T-cell (primary cell): ENCODE measurements at regions of chr1 and their contacts with region 1.

Region 1: GRCh38 chr1:84944767-84945486 is 51.9 kb upstream of the LPAR3 start:
- DNase-seq: peak; percentile 22 to 97 (median 70)
- ATAC-seq: peak; percentile 90 to 95 (median 93)
- H3K4me3 ChIP-seq: peak overlapping the region; percentile 46
- H3K4me3 Mint-ChIP-seq: peak overlapping the region; percentile 79
- H3K27ac ChIP-seq: peak overlapping the region; percentile 85
- H3K27ac Mint-ChIP-seq: peak overlapping the region; percentile 91 to 94
- H3K4me1 ChIP-seq: peaks cover 0 to 9% of the 10 kb centered on the region in 2 experiments
- H3K4me1 Mint-ChIP-seq: peaks cover 6 to 12% (median 11%) of the 10 kb centered on the region in 3 donors
- H3K27me3 ChIP-seq: no peaks in the 10 kb centered on the region
- H3K27me3 Mint-ChIP-seq: no peaks in the 10 kb centered on the region

Region 2: GRCh38 chr1:83689921-83690868 is 1254.7 kb before region 1 on chr1:
- CTCF ChIA-PET with region 1: no interaction called
- POLR2A ChIA-PET with region 1: no interaction called
- DNase-seq: no peak
- ATAC-seq: no peak
- H3K4me3 ChIP-seq: no peak overlapping the region
- H3K4me3 Mint-ChIP-seq: no peak overlapping the region
- H3K27ac ChIP-seq: no peak overlapping the region
- H3K27ac Mint-ChIP-seq: no peak overlapping the region
- H3K4me1 ChIP-seq: peaks cover 3 to 5% of the 10 kb centered on the region in 2 experiments
- H3K4me1 Mint-ChIP-seq: peaks cover 14 to 25% (median 22%) of the 10 kb centered on the region in 3 donors
- H3K27me3 ChIP-seq: peaks cover 0 to 10% of the 10 kb centered on the region in 2 experiments
- H3K27me3 Mint-ChIP-seq: peaks cover 0 to 8% of the 10 kb centered on the region in 2 donors

Region 3: GRCh38 chr1:84675631-84676030 is 269.3 kb before region 1 on chr1:
- CTCF ChIA-PET with region 1: no interaction called
- POLR2A ChIA-PET with region 1: no interaction called
- DNase-seq: no peak
- ATAC-seq: no peak
- H3K4me3 ChIP-seq: no peak overlapping the region
- H3K4me3 Mint-ChIP-seq: no peak overlapping the region
- H3K27ac ChIP-seq: no peak overlapping the region
- H3K27ac Mint-ChIP-seq: no peak overlapping the region
- H3K4me1 ChIP-seq: no peaks in the 10 kb centered on the region
- H3K4me1 Mint-ChIP-seq: peaks cover 16 to 33% (median 18%) of the 10 kb centered on the region in 3 donors
- H3K27me3 ChIP-seq: no peaks in the 10 kb centered on the region
- H3K27me3 Mint-ChIP-seq: no peaks in the 10 kb centered on the region

Region 4: GRCh38 chr1:84853741-84854721 is 90.9 kb before region 1 on chr1:
- CTCF ChIA-PET with region 1: interaction called, 3 to 10 read pairs
- POLR2A ChIA-PET with region 1: no interaction called
- DNase-seq: peak in 17 of 35 experiments; percentile 5 to 69 (median 16)
- ATAC-seq: peak; percentile 98 to 100 (median 100)
- H3K4me3 ChIP-seq: no peak overlapping the region
- H3K4me3 Mint-ChIP-seq: peak overlapping the region in 2 of 3 donors; percentile 1 to 5
- H3K27ac ChIP-seq: peak overlapping the region; percentile 51
- H3K27ac Mint-ChIP-seq: peak overlapping the region; percentile 91 to 94
- H3K4me1 ChIP-seq: peaks cover 17 to 19% of the 10 kb centered on the region in 2 experiments
- H3K4me1 Mint-ChIP-seq: peaks cover 39 to 49% (median 43%) of the 10 kb centered on the region in 3 donors
- H3K27me3 ChIP-seq: no peaks in the 10 kb centered on the region
- H3K27me3 Mint-ChIP-seq: no peaks in the 10 kb centered on the region

Region 5: DNA sequence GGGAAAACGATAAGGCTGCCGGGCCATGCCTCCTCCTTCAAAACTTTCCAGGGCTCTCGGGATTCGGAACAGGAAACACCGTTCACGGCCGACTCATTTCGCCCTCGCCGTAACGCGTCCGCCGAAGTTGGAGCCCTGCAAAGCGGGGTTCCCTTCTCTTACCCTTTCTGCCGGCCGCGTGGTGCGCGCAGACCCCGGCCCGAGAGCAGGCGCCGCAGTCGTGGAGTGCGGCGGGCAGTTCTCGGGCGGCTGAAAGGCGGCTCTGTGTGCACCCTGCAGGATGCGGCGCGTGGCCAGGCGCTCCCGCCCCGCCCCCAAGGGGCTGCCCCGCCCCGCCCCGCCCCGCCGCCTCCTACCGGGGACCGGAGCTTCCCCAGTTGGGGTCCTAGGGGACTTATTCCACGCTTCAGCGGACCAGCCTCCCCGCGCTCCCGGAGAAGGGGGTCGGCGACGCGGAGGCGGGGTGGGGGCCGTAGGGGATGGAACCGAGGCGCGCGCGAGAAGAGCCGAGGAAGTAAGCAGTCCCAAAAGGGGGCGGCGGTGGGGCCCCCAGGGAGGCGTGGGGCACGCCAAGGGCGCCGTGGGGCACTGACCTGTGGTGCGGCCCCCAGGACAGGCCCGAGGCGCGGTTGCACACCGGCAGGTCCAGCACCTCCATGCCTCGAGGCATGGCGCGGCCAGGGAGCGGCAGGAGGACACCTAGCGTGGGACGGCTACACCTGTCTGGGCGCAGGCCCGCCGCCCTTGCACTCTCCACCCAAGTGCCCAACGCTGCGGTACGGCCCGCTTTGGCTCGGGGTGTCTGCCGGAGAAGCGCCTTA is 52.1 kb after region 1 on chr1 and contains the start of gene MCOLN2:
- CTCF ChIA-PET with region 1: interaction called, 4 to 15 read pairs
- POLR2A ChIA-PET with region 1: interaction called in 1 of 2 experiments, 6 read pairs
- DNase-seq: peak in 28 of 35 experiments; percentile 6 to 72 (median 32)
- ATAC-seq: peak; percentile 71 to 84 (median 77)
- H3K4me3 ChIP-seq: peak within 1 kb of the TSS; percentile 65 to 76
- H3K4me3 Mint-ChIP-seq: peak within 1 kb of the TSS; percentile 84 to 90 (median 86)
- H3K27ac ChIP-seq: peak within 1 kb of the TSS; percentile 71
- H3K27ac Mint-ChIP-seq: peak within 1 kb of the TSS; percentile 59 to 70
- H3K4me1 ChIP-seq: peaks cover 10 to 35% of the 10 kb centered on the region in 2 experiments
- H3K4me1 Mint-ChIP-seq: peaks cover 14 to 63% (median 41%) of the 10 kb centered on the region in 3 donors
- H3K27me3 ChIP-seq: peaks cover 18 to 32% of the 10 kb centered on the region in 2 experiments
- H3K27me3 Mint-ChIP-seq: peaks cover 29 to 30% of the 10 kb centered on the region in 2 donors
- total RNA-seq, gene MCOLN2: 7.6 to 19.3 (median 15.8) TPM

Region 6: DNA sequence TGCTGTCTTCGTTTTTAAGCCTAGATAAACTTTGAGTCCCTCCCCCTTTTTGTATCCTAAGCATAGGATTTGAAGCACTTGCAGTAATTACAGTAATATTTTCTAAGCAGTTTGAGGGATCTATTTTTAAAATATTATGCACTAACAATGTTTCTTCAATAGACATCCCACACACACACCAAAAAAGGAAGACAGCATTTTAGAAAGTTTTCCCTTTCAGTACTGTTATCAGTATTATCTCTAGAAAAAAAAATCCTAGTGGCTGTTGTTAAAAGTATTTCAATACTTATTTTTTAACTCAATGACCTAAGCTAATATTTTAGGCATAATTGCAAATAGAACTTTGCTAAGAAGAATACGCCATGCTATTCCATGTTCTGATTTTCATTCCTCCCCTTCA is 88.3 kb after region 1 on chr1:
- CTCF ChIA-PET with region 1: interaction called, 31 to 316 read pairs
- POLR2A ChIA-PET with region 1: interaction called in 1 of 2 experiments, 13 read pairs
- DNase-seq: no peak
- ATAC-seq: no peak
- H3K4me3 ChIP-seq: no peak overlapping the region
- H3K4me3 Mint-ChIP-seq: no peak overlapping the region
- H3K27ac ChIP-seq: no peak overlapping the region
- H3K27ac Mint-ChIP-seq: no peak overlapping the region
- H3K4me1 ChIP-seq: no peaks in the 10 kb centered on the region
- H3K4me1 Mint-ChIP-seq: no peaks in the 10 kb centered on the region
- H3K27me3 ChIP-seq: no peaks in the 10 kb centered on the region
- H3K27me3 Mint-ChIP-seq: peaks cover 0 to 7% of the 10 kb centered on the region in 2 donors

Region 7: GRCh38 chr1:85240174-85240601 is 295.3 kb after region 1 on chr1:
- CTCF ChIA-PET with region 1: interaction called in 1 of 2 experiments, 18 read pairs
- POLR2A ChIA-PET with region 1: no interaction called
- DNase-seq: peak in 2 of 35 experiments; percentile 6 to 38
- ATAC-seq: peak in 3 of 4 experiments; percentile 44 to 61 (median 57)
- H3K4me3 ChIP-seq: no peak overlapping the region
- H3K4me3 Mint-ChIP-seq: no peak overlapping the region
- H3K27ac ChIP-seq: no peak overlapping the region
- H3K27ac Mint-ChIP-seq: peak overlapping the region; percentile 76 to 86
- H3K4me1 ChIP-seq: peaks cover 0 to 2% of the 10 kb centered on the region in 2 experiments
- H3K4me1 Mint-ChIP-seq: peaks cover 12 to 15% (median 12%) of the 10 kb centered on the region in 3 donors
- H3K27me3 ChIP-seq: no peaks in the 10 kb centered on the region
- H3K27me3 Mint-ChIP-seq: peaks cover 2 to 3% of the 10 kb centered on the region in 2 donors

Region 8: GRCh38 chr1:85276215-85276977 is 331.5 kb after region 1 on chr1 and contains the start of gene BCL10:
- CTCF ChIA-PET with region 1: interaction called, 5 to 31 read pairs
- POLR2A ChIA-PET with region 1: interaction called in 1 of 2 experiments, 4 read pairs
- DNase-seq: peak; percentile 94 to 99 (median 97)
- ATAC-seq: peak; percentile 96 to 99 (median 98)
- H3K4me3 ChIP-seq: peak within 1 kb of the TSS; percentile 68 to 100
- H3K4me3 Mint-ChIP-seq: peak within 1 kb of the TSS; percentile 83 to 88 (median 86)
- H3K27ac ChIP-seq: peak within 1 kb of the TSS; percentile 87
- H3K27ac Mint-ChIP-seq: peak within 1 kb of the TSS; percentile 86 to 94
- H3K4me1 ChIP-seq: peaks cover 10 to 14% of the 10 kb centered on the region in 2 experiments
- H3K4me1 Mint-ChIP-seq: peaks cover 49 to 62% (median 58%) of the 10 kb centered on the region in 3 donors
- H3K27me3 ChIP-seq: no peaks in the 10 kb centered on the region
- H3K27me3 Mint-ChIP-seq: no peaks in the 10 kb centered on the region
- total RNA-seq, gene BCL10: 25.8 to 40.0 (median 28.0) TPM